ENCODE measurements at regions of chr16 and their contacts with region 1.

Region 1: GRCh38 chr16:67279296-67280089 is at the start of gene PLEKHG4:
- DNase-seq: peak; percentile 96
- CTCF ChIP-seq: peak; percentile 89

Region 2: GRCh38 chr16:67294938-67295361 is 15.5 kb after region 1 on chr16:
- CTCF ChIA-PET with region 1: interaction called, 11 read pairs
- POLR2A ChIA-PET with region 1: no interaction called
- DNase-seq: no peak
- CTCF ChIP-seq: no peak

Region 3: GRCh38 chr16:67723151-67723982 is 443.9 kb after region 1 on chr16:
- CTCF ChIA-PET with region 1: no interaction called
- POLR2A ChIA-PET with region 1: no interaction called
- DNase-seq: no peak
- CTCF ChIP-seq: no peak